ENCODE measurements at regions of chr16 and their contacts with region 1.

Region 1: GRCh38 chr16:69796351-69797118 is 34.4 kb downstream of the WWP2 start:
- DNase-seq: peak; percentile 34 to 68 (median 67)
- H3K4me3 ChIP-seq: no peak overlapping the region
- H3K27ac ChIP-seq: no peak overlapping the region
- H3K4me1 ChIP-seq: peaks cover 0 to 2% (median 0%) of the 10 kb centered on the region in 4 experiments
- H3K27me3 ChIP-seq: no peaks in the 10 kb centered on the region

Region 2: GRCh38 chr16:69717066-69717465 is 79.5 kb before region 1 on chr16:
- CTCF ChIA-PET with region 1: no interaction called
- POLR2A ChIA-PET with region 1: no interaction called
- DNase-seq: no peak
- H3K4me3 ChIP-seq: no peak overlapping the region
- H3K27ac ChIP-seq: no peak overlapping the region
- H3K4me1 ChIP-seq: no peaks in the 10 kb centered on the region
- H3K27me3 ChIP-seq: no peaks in the 10 kb centered on the region

Region 3: GRCh38 chr16:69930117-69930776 is 133.7 kb after region 1 on chr16:
- CTCF ChIA-PET with region 1: interaction called, 24 read pairs
- POLR2A ChIA-PET with region 1: no interaction called
- DNase-seq: peak; percentile 48 to 72 (median 60)
- H3K4me3 ChIP-seq: no peak overlapping the region
- H3K27ac ChIP-seq: no peak overlapping the region
- H3K4me1 ChIP-seq: no peaks in the 10 kb centered on the region
- H3K27me3 ChIP-seq: no peaks in the 10 kb centered on the region

Measured in common myeloid progenitor, CD34-positive (primary cell).